Activated CD8-positive, alpha-beta T cell treated with anti-CD3 and anti-CD28 coated beads for 36 hours (primary cell): ENCODE measurements at regions of chr3 and their contacts with region 1.

Region 1: GRCh38 chr3:107676469-107677309 is 153.9 kb downstream of the BBX start:
- DNase-seq: no peak
- ATAC-seq: no peak
- H3K4me3 Mint-ChIP-seq: no peak overlapping the region
- H3K27ac Mint-ChIP-seq: no peak overlapping the region
- H3K4me1 Mint-ChIP-seq: peaks cover 30% of the 10 kb centered on the region
- H3K27me3 Mint-ChIP-seq: no peaks in the 10 kb centered on the region
- CTCF ChIP-seq: peak; percentile 64

Region 2: DNA sequence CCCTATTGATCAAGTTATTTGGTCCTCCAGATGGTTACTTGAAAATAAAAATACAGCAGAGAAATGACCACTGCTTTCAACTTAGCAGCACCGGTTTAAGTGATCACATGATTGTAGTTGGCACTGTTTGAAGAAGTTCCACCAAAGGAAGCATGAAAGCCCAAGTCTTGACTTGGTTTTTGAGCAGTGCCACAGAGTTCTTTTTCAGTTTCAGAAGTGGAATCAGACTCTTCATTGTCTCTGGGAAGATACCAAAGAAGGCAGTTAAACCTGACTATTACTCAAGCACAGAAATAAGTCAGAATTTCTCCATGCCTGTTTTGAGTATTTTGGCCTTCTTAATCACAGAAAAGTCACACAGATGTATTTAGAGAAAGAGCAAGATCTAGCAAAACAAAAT is 87.2 kb before region 1 on chr3:
- CTCF ChIA-PET with region 1: no interaction called
- POLR2A ChIA-PET with region 1: no interaction called
- intact Hi-C with region 1: no loop called
- DNase-seq: no peak
- ATAC-seq: peak; percentile 58
- H3K4me3 Mint-ChIP-seq: no peak overlapping the region
- H3K27ac Mint-ChIP-seq: peak overlapping the region; percentile 0
- H3K4me1 Mint-ChIP-seq: peaks cover 23% of the 10 kb centered on the region
- H3K27me3 Mint-ChIP-seq: no peaks in the 10 kb centered on the region
- CTCF ChIP-seq: no peak

Region 3: DNA sequence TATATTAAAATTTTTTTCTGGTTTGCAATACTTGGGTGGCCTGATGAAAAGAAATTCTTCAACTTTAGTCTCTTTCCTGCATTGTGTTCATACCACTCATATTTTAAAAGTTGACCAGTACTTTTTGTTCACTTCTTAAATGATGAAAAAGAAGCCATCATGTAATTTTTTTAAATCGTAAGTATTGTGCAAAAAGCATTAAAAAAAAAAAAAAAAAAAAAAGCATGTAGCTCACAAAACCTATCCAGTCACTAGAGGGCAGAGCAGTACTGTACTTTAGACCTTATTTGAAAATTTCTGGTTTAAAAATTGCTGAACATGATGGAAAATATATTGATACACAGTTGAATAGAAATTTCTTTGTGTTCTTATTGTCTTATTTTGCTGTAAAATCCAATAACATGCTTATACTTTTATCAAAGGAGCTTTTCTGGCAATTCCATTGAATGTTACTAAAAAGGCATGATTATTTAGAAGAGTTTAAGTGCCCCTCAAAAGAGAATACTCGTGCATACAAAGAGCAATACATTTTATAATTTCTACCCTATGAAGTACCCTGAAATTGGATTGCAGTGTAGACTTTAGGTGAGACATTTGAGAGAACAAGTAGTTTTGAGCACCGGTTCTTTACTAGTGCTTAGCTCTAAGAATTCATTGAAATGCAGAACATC is 16.2 kb before region 1 on chr3:
- CTCF ChIA-PET with region 1: interaction called, 60 read pairs
- POLR2A ChIA-PET with region 1: no interaction called
- intact Hi-C with region 1: no loop called
- DNase-seq: no peak
- ATAC-seq: no peak
- H3K4me3 Mint-ChIP-seq: no peak overlapping the region
- H3K27ac Mint-ChIP-seq: no peak overlapping the region
- H3K4me1 Mint-ChIP-seq: peaks cover 26% of the 10 kb centered on the region
- H3K27me3 Mint-ChIP-seq: no peaks in the 10 kb centered on the region
- CTCF ChIP-seq: peak; percentile 68

Region 4: GRCh38 chr3:107740992-107741896 is 64.6 kb after region 1 on chr3:
- CTCF ChIA-PET with region 1: interaction called, 73 read pairs
- POLR2A ChIA-PET with region 1: no interaction called
- intact Hi-C with region 1: loop called (anchors 5 kb)
- DNase-seq: no peak
- ATAC-seq: no peak
- H3K4me3 Mint-ChIP-seq: no peak overlapping the region
- H3K27ac Mint-ChIP-seq: no peak overlapping the region
- H3K4me1 Mint-ChIP-seq: no peaks in the 10 kb centered on the region
- H3K27me3 Mint-ChIP-seq: no peaks in the 10 kb centered on the region
- CTCF ChIP-seq: no peak

Region 5: GRCh38 chr3:107846279-107846852 is 169.7 kb after region 1 on chr3:
- CTCF ChIA-PET with region 1: interaction called, 13 read pairs
- POLR2A ChIA-PET with region 1: no interaction called
- intact Hi-C with region 1: loop called (anchors 10 kb)
- DNase-seq: peak; percentile 67
- ATAC-seq: no peak
- H3K4me3 Mint-ChIP-seq: no peak overlapping the region
- H3K27ac Mint-ChIP-seq: no peak overlapping the region
- H3K4me1 Mint-ChIP-seq: no peaks in the 10 kb centered on the region
- H3K27me3 Mint-ChIP-seq: peaks cover 5% of the 10 kb centered on the region
- CTCF ChIP-seq: peak; percentile 59

Region 6: DNA sequence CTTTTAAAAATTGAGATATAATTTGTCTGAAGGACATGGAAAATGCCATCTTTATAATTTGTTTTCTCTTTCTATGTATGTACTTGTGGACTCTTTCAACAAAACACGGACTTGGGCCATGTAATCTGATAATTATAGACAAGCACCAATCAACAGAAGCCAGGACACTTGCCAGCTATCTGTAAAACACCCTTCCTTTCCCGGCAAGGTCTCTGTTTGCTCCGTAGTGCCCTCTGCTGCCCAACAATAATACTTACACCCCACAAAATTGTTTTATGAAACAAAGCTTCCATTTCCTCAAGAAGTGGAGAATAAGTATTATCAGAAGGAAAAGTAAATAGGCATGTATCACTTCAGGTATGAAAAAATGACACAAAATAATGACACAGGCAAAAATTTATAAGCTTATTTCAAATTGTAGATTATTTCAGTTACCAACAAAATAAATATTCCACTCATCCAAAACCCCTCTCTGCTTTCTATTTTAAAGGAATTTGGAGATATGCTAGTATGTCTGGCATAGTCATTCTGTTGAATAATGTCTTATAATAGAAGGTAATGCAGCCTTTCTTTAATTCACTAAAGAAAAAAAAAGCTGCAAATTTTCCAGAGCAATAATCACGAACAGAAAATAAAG is 800.9 kb after region 1 on chr3:
- CTCF ChIA-PET with region 1: interaction called, 10 read pairs
- POLR2A ChIA-PET with region 1: no interaction called
- intact Hi-C with region 1: no loop called
- DNase-seq: peak; percentile 68
- ATAC-seq: peak; percentile 95
- H3K4me3 Mint-ChIP-seq: no peak overlapping the region
- H3K27ac Mint-ChIP-seq: no peak overlapping the region
- H3K4me1 Mint-ChIP-seq: no peaks in the 10 kb centered on the region
- H3K27me3 Mint-ChIP-seq: no peaks in the 10 kb centered on the region
- CTCF ChIP-seq: peak; percentile 61